Activated CD8-positive, alpha-beta memory T cell treated with anti-CD3 and anti-CD28 coated beads, Interleukin-2, amount 10 ng/mL, durations not matched to agents 7 days and 5 days (primary cell): ENCODE measurements at regions of chr7 and their contacts with region 1.

Region 1: DNA sequence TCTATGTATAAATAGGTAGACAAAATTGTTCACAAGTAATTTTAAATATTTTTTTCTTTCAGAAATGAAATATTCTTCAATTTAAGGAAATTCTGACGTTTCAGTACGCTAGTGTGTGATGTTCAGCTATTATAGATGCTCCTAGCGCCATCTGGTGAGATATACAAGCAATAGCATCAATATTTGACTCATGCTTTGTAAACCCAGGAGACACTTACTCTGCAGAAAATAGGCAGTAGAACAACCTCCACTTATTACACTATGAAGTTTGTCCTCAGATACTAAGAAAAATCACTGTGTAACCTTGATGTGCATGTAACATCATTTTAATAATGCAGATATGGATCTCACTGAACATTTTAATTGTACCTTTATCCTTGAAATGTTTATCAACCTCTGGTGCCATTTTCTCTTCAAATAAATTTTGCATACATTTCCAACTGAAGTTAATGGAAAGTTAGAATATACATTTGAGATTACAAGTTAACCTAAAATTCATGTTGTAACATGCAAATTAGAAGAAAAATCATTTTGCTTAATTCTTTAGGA is 151.5 kb upstream of the FAM3C start:
- DNase-seq: no peak
- ATAC-seq: peak; percentile 71
- H3K4me3 Mint-ChIP-seq: no peak overlapping the region
- H3K27ac Mint-ChIP-seq: no peak overlapping the region
- H3K4me1 Mint-ChIP-seq: peaks cover 46% of the 10 kb centered on the region
- H3K27me3 Mint-ChIP-seq: no peaks in the 10 kb centered on the region

Region 2: DNA sequence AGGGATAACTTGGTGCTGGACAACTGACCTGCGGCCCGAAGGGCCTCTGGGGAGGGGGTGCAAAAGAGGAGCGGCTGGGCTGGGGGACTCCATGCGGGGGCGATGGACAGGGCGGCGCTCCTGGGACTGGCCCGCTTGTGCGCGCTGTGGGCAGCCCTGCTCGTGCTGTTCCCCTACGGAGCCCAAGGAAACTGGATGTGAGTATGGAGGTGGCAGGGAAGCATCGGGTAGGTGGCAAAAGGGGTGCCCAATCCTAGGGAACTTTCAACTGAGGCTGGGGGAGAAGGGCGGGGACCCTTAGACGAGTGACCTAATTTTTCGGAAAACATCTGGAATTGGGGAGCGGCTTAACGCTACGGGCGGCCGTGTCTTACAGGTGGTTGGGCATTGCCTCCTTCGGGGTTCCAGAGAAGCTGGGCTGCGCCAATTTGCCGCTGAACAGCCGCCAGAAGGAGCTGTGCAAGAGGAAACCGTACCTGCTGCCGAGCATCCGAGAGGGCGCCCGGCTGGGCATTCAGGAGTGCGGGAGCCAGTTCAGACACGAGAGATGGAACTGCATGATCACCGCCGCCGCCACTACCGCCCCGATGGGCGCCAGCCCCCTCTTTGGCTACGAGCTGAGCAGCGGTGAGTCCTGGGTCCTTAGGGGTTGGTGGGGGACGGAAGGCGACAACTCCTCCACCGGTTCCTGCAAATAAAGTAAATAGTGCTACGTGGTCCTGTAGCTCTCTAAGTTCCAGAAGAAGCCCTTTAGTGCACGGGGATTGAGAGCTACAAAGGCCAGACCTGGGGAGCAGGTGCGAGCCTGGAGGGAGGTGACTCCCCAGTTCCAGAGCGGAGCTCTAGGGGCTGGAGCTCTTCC is 218.2 kb before region 1 on chr7:
- CTCF ChIA-PET with region 1: interaction called, 18 read pairs
- DNase-seq: peak; percentile 60
- ATAC-seq: peak; percentile 74
- H3K4me3 Mint-ChIP-seq: peak overlapping the region; percentile 66
- H3K27ac Mint-ChIP-seq: no peak overlapping the region
- H3K4me1 Mint-ChIP-seq: peaks cover 23% of the 10 kb centered on the region
- H3K27me3 Mint-ChIP-seq: peaks cover 67% of the 10 kb centered on the region

Region 3: DNA sequence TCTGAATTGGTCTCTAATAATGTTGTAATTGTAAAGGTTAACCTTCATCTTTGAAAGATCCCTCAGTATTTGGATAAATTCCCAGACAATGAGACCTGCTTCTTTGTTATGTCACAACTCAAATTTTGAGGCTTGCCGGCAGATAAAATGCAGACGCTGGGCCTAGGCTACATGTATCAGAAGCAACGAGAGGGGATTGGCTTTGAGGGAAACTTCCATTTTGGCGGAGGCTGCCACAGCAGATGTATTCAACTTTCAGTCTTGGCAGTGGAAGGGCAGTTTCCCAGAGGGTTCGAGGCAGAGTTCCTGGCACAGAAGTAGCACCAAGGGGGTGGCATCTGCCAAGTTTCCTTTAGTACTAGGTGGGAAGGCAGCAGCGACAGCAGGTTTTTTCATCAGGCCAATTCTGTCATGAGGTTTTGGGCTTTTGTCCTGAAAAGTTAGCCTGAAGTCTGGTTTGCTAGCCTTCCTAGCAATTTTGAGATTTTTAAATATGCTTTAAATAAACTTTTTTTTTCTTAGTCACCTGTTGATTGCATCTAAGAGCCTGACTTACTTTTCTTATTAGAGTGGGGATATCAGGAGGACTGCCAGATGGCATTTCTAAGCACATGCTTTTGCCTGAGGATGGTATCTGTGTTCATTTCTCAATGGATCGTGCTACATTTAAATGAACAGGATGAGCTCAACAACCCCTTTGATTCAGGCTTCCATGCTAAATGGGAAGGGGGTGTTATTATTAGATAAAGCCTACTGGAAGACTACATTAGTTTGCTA is 62.0 kb before region 1 on chr7:
- CTCF ChIA-PET with region 1: no interaction called
- DNase-seq: no peak
- ATAC-seq: no peak
- H3K4me3 Mint-ChIP-seq: no peak overlapping the region
- H3K27ac Mint-ChIP-seq: no peak overlapping the region
- H3K4me1 Mint-ChIP-seq: peaks cover 8% of the 10 kb centered on the region
- H3K27me3 Mint-ChIP-seq: no peaks in the 10 kb centered on the region

Region 4: DNA sequence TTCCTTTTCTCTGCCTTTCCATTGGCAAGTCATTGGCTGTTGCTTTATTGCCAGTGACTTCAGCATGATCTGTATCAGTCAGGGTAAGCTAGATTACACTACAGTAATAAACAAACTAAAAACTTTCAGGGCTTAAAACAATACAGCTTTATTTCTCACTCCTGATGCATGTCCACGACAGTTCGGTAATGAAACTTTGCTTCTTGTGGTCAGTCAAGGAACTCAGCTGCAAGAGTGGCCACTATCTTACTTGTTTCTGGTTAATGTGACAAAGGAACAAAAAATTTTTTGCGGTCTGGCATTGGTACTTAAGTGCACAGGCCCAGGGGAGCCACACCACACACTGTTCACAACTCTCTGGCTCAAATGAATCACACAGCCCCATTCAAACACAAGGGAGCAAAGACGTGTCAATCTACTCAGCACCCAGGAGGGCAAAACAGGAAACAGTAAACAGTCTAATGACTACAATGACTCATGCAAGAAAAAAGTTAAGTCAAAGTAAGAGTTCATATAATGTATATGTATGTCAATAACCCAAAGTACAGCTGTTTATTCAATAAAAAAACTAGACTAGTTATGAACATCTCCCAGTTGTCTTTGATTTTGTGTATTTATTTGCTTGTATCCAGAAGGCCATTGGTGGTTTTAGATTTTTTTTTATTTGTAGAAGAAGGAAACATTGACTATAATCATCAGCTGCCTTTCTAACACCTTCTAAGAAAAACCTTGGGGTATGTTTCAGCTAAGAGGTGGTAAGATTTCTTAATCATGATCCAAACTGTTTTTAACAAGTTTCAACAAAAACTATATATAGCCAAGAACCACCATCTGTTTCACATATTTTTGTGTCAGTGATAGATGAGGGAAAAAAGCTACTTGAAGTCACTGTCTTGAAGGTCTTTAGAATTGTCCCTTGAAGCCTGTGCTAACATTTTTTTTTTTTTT is 17.1 kb before region 1 on chr7:
- CTCF ChIA-PET with region 1: interaction called, 25 read pairs
- DNase-seq: peak; percentile 92
- ATAC-seq: peak; percentile 99
- H3K4me3 Mint-ChIP-seq: peak overlapping the region; percentile 36
- H3K27ac Mint-ChIP-seq: peak overlapping the region; percentile 90
- H3K4me1 Mint-ChIP-seq: peaks cover 52% of the 10 kb centered on the region
- H3K27me3 Mint-ChIP-seq: no peaks in the 10 kb centered on the region